ENCODE measurements at regions of chr15 and their contacts with region 1.

Region 1: DNA sequence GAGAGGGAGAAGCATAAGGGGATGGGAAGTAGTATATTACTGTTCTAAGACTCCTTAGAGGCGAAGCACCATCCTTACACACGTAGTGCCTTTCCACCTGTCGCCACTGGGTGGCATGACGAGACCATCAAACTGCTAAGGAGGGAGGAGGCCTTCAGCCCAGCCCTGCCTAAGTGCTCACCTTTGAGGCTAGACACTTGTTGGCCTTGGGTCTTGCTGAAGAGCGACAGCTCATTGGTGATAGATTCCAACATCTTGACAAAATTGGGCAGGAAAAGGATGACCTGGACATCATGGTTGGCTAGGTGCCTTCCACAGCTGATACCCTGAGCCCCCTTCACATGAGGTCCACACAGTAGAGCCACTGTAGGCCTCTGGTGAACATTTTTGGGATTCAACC is 19.6 kb downstream of the CLK3 start:
- DNase-seq: peak; percentile 82
- H3K27ac ChIP-seq: no peak overlapping the region
- CTCF ChIP-seq: peak; percentile 92

Region 2: DNA sequence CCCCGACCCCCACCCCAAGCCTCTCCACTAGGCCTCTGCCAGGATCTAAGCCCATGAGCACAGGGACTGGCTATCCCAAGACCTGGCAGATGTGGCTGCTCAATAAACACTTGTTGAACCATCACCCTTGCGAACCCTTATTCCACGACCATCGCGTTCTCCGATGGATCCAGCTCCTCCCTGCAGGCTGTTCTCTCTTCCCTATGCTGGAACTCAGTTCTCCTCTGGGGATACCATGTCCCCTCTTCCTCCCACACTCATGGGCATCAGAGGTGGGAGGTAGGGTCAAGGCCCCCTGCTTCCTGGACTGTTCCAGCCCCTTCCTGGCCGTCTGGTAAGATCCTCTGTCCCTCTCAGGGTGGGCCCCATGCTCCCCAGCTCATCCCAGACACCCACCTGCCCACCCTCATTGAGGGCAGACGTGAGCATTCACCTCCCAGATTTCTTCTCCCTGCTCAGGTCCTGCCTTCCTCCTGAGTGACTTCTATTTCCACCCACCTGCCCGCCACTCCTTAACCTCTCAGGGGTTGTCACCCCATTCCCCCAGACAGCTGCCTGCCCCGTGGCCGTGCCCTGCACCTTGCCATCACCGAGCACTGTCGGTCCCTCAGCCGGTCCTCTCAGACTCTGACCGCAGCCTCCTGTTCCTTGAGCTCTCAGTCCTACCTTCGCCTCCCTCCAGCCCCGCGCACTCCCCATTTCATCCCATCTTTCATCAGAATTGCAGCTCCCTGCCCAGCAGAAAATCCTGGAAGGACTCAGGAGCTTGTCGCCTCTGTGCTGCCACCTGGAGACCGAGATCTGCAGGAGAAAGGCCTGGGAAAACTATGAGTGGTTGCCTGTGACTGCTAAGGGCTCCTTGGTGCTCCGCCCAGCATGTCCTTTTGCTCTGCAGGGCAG is 598.7 kb before region 1 on chr15:
- CTCF ChIA-PET with region 1: no interaction called
- POLR2A ChIA-PET with region 1: no interaction called
- DNase-seq: peak; percentile 55
- H3K27ac ChIP-seq: peak overlapping the region; percentile 4; the same call in 1 of the 2 replicates
- CTCF ChIP-seq: peak; percentile 50

Region 3: DNA sequence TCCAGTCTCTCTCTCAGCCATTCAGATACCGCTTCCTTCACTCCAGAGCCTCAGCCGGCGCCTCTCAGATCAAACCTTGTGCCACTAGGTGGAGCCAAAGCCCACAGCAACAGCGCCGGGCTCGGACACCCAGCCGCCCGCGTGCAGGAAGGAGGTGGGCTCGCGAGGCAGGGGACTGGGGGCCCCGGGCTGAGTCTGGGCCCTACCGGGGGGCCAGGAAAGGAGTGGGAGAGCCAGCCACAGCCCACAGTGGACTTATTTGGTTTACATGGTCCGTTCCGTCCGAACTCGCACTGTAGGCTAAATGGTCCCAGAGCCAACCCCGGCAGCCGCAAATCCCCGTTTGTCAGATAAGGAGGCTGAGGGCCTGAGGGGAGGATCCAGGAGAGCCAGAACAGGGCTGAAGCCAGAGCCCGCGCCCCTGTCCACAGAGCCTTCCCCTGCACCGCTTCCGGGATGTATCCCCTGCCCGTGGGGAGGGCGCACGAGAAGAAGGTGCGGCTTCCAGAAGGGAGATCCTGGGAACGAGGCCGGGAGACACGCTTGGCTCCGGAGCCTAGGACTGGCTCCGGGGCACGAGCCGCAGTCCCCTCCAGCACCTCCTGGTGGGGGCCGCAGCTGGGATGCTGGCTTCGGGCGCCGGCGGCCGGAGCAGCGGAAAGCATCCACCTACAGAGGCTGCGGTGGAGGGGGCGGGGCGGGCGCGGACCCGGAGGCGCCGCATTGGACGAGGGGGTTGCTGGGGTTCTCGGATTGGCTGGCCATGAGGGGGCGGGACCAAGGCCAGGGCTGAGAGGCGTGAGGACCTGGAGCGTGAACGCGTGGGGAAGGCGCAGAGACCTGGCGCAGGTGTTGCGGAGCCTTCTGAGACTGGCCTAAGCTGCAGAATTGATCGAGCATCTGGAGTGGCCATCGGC is 261.2 kb before region 1 on chr15:
- CTCF ChIA-PET with region 1: interaction called, 16 read pairs
- POLR2A ChIA-PET with region 1: no interaction called
- DNase-seq: peak; percentile 99
- H3K27ac ChIP-seq: peak overlapping the region; percentile 66
- CTCF ChIP-seq: peak; percentile 90

Region 4: GRCh38 chr15:74620636-74621545 is 14.3 kb before region 1 on chr15:
- CTCF ChIA-PET with region 1: interaction called, 29 read pairs
- POLR2A ChIA-PET with region 1: no interaction called
- DNase-seq: peak; percentile 83
- H3K27ac ChIP-seq: peak overlapping the region; percentile 61
- CTCF ChIP-seq: peak; percentile 95